H1 (cell line): ENCODE measurements at regions of chr17 and their contacts with region 1.

Region 1: DNA sequence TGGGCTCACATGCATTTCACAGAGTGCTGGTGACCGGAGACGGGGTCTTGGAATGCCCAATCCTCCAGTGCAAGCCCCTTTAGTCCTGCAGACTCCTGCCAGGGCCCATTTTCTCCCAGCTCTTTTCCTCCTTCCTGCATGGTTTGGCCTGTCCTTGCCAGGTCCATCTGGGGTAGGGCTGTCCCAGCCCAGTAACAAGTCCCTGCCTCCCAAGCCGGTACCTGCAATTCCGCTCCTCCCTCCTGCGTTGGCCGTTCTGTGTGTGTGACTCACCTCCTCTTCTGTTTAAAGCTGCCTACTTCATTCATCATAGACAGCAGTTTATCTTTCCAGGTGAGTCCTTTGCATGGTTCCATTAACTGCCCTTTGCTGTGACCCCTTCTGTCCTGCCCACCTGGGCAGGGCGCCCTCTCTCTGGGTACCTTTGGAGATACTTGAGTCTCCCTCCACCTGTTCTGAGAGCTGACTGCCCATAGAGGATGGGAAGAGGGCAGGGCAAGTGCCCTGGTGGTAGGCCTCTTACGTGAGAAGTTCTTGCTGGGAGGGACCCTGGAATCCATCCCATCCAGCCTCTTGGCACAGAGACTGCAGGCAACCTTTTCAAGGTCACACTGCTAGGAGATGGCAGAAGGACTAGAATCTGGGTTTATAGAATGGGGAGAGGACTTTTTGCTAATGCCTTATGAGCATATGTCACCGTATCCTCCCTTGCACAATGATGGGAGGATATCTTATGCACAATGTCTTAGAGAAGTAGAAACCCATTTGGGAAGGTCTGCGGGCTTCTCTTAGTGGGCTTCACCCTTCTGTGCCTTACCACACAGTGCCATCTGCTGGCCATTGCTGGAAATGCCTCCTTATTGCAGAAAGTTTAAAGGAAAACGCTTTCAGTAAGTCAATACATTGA is 29.7 kb upstream of the LGALS9 start:
- DNase-seq: peak; percentile 68 to 95
- H3K4me3 ChIP-seq: no peak overlapping the region
- H3K27ac ChIP-seq: no peak overlapping the region
- H3K4me1 ChIP-seq: no peaks in the 10 kb centered on the region; a peak in 1 of 7 replicates
- H3K27me3 ChIP-seq: no peaks in the 10 kb centered on the region
- CTCF ChIP-seq: peak; percentile 54 to 87 (median 87)
- EP300 ChIP-seq: peak in 1 of 2 experiments; percentile 33; a peak in 1 of 3 replicates
- POLR2A ChIP-seq: no peak
- RAD21 ChIP-seq: peak; percentile 90 to 93

Region 2: DNA sequence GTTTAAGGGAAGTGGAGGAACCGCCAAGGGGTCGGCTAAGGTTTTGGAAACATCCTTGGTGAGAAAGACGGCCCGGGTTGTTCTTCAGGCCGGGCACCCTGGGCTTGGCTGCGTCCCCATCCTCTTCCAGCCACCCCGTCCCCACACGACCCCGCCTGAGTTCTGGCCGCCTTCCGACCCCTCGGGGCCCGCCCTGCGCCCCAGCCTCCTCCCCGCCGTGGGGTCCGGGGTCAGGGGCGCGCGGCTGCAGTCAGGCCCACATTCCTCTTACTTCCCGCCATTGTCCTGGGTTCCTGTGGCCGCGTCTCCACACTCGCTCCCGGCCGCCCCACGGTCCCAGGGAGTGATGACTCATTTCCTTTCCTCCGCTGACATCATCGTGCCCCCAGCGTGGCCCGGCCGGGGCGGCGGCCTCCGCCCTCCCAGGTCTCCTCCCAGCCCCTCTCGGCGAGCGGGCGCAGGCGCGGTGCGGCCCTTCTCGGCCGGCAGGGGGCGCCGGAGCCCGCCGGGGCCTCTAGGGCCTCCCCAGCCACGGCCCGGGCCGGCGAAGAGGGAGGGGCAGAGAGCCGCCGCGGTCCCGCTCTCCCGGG is 247.8 kb before region 1 on chr17:
- CTCF ChIA-PET with region 1: interaction called, 15 read pairs
- POLR2A ChIA-PET with region 1: no interaction called
- DNase-seq: peak; percentile 53 to 90
- H3K4me3 ChIP-seq: peak overlapping the region; percentile 47 to 94 (median 64)
- H3K27ac ChIP-seq: peak overlapping the region; percentile 58; the same call in 1 of the 2 replicates
- H3K4me1 ChIP-seq: peaks cover 0 to 8% (median 4%) of the 10 kb centered on the region in 4 experiments; a peak in 3 of 7 replicates
- H3K27me3 ChIP-seq: no peaks in the 10 kb centered on the region
- CTCF ChIP-seq: peak; percentile 74 to 96 (median 76)
- EP300 ChIP-seq: no peak
- POLR2A ChIP-seq: peak in 1 of 2 experiments; percentile 81; a peak in 1 of 3 replicates
- RAD21 ChIP-seq: peak; percentile 52 to 85; a peak in 3 of 4 replicates

Region 3: GRCh38 chr17:27413792-27414191 is 187.5 kb before region 1 on chr17:
- CTCF ChIA-PET with region 1: interaction called, 20 read pairs
- POLR2A ChIA-PET with region 1: no interaction called
- DNase-seq: no peak
- H3K4me3 ChIP-seq: no peak overlapping the region
- H3K27ac ChIP-seq: no peak overlapping the region
- H3K4me1 ChIP-seq: no peaks in the 10 kb centered on the region; a peak in 1 of 7 replicates
- H3K27me3 ChIP-seq: 0 out of 7 replicates have a peak, but pooled peaks cover 0 to 4% (median 0%) of the 10 kb centered on the region in 4 experiments
- CTCF ChIP-seq: no peak
- EP300 ChIP-seq: no peak
- POLR2A ChIP-seq: no peak
- RAD21 ChIP-seq: no peak

Region 4: DNA sequence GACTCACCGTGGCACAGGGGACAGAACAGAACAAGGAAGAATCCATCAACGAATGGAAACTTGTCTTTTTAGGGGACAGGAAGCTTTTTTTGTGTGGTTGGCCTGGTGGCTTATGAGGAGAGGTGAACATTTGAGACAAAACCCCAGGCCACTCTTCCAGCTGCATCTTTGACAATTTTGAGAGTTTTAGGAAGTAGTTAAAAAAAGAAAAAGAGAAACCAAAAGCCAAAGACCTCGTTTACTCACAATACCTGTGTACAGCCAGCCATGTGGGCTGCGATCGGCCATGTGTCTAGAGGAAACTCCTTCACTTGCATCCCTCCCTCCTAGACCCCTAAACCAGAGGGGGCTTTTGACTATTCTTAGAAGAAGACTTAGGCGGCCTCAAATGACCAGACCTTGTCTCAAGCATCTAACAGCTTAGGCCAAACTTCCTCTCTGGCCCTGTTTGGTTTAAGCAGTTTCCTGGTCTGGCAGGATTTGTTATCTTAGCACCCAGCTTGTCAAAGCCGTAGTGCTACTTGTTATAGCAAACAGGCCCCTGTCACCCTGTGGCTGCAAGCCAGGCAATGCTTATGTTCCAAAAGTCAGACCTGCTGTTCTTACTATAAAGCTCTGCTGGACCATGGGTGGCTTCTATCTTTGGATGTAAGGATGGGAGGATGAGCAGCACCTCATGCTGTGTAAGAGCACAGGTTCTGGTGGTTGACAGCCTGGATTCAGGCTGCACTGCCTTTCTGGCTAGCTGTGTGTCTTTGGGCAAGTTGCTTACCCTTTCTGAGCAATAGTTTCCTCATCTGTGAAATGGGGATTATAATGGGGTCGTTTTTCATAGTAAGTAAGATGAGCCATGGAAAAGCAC is 127.3 kb before region 1 on chr17:
- CTCF ChIA-PET with region 1: interaction called, 23 read pairs
- POLR2A ChIA-PET with region 1: no interaction called
- DNase-seq: no peak
- H3K4me3 ChIP-seq: no peak overlapping the region
- H3K27ac ChIP-seq: no peak overlapping the region
- H3K4me1 ChIP-seq: peaks cover 12 to 28% (median 24%) of the 10 kb centered on the region in 4 experiments
- H3K27me3 ChIP-seq: no peaks in the 10 kb centered on the region
- CTCF ChIP-seq: no peak
- EP300 ChIP-seq: no peak
- POLR2A ChIP-seq: no peak
- RAD21 ChIP-seq: no peak

Region 5: DNA sequence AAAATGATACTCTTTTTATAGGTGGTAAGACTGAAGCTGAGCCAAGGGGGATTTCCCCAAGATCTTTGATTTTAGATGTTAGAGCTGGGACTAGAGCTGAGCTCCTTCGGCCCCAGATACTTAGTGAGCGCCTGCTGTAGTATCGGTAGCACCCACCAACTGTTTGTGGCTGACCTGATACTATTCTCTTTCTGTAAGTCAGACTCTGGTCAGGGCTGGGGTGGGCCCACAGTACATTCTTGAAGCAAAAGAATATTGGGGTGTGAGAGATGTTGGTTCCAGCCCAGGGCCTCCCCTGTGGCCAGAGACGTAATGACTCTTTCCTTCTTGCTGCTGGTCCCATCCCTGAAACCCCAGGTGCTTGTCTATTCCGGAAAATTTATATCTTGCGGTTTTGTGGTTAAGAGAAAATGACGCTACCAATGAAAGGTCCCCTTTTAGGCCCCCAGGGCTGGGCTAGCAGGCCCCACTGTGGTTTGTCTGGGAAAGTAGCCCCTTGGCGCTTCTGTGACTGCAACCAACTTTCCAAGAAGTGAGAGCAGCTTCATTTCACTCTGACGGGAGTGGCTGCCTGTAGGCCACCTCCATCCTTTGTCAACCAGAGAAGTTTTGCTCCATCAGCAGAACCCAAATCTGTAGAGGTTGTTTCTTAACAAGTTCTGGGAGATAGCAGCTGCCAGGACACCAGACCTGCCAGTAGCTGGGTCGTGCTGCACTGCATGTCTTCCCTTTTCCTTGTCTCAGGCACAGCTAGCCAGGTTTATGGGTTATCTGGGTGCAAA is 56.8 kb before region 1 on chr17:
- CTCF ChIA-PET with region 1: interaction called, 17 read pairs
- POLR2A ChIA-PET with region 1: no interaction called
- DNase-seq: no peak
- H3K4me3 ChIP-seq: no peak overlapping the region
- H3K27ac ChIP-seq: no peak overlapping the region
- H3K4me1 ChIP-seq: peaks cover 0 to 4% (median 2%) of the 10 kb centered on the region in 4 experiments; a peak in 5 of 7 replicates
- H3K27me3 ChIP-seq: no peaks in the 10 kb centered on the region
- CTCF ChIP-seq: no peak
- EP300 ChIP-seq: no peak
- POLR2A ChIP-seq: no peak
- RAD21 ChIP-seq: no peak

Region 6: DNA sequence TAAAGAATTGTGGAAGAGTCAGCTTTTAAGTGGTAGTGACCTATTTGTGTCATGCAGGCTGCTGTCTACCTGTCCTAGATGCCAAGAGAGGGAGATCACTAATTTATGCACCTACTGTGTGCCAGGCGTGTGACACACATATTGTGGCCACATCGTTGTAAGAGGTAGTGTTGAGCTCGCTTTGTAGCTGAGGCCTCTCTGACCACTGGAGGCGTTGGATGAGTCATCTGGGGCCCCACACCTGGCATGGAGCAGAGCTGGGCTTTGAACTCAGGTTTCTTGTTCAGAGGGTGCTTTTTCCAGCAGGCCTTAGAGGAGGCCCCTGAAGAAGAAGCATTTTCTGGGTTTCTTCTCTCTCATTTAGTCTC is 22.6 kb before region 1 on chr17:
- CTCF ChIA-PET with region 1: interaction called, 150 read pairs
- POLR2A ChIA-PET with region 1: no interaction called
- DNase-seq: no peak
- H3K4me3 ChIP-seq: no peak overlapping the region
- H3K27ac ChIP-seq: no peak overlapping the region
- H3K4me1 ChIP-seq: peaks cover 2 to 12% (median 8%) of the 10 kb centered on the region in 4 experiments; a peak in 6 of 7 replicates
- H3K27me3 ChIP-seq: no peaks in the 10 kb centered on the region
- CTCF ChIP-seq: no peak
- EP300 ChIP-seq: no peak
- POLR2A ChIP-seq: no peak
- RAD21 ChIP-seq: no peak

Region 7: GRCh38 chr17:27654654-27655524 is 53.6 kb after region 1 on chr17:
- CTCF ChIA-PET with region 1: interaction called, 305 read pairs
- POLR2A ChIA-PET with region 1: no interaction called
- DNase-seq: peak; percentile 75 to 93
- H3K4me3 ChIP-seq: no peak overlapping the region
- H3K27ac ChIP-seq: no peak overlapping the region
- H3K4me1 ChIP-seq: no peaks in the 10 kb centered on the region
- H3K27me3 ChIP-seq: no peaks in the 10 kb centered on the region
- CTCF ChIP-seq: peak; percentile 70 to 89 (median 84)
- EP300 ChIP-seq: no peak; a peak in 1 of 3 replicates
- POLR2A ChIP-seq: no peak
- RAD21 ChIP-seq: peak; percentile 57 to 62

Region 8: DNA sequence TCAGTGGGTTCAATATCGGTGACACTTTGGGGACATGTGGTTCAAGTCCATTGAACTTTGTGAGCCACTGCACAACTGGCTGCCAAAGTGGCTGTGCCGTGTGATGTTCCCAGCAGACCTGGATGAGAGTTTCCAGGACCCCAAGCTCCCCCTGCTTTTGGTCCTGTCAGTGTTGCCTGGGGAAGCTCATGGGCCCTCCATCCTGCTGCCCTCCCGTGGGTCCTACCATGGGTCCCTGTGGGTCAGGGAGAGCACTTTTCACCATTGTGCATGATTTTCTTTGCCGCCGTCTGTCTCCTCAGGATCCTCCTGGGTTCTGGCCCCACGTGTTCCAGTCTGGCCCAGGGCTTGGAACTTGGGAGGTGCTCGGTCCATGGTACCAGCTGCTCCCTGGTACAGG is 67.8 kb after region 1 on chr17:
- CTCF ChIA-PET with region 1: no interaction called
- POLR2A ChIA-PET with region 1: no interaction called
- DNase-seq: no peak
- H3K4me3 ChIP-seq: no peak overlapping the region
- H3K27ac ChIP-seq: no peak overlapping the region
- H3K4me1 ChIP-seq: no peaks in the 10 kb centered on the region
- H3K27me3 ChIP-seq: no peaks in the 10 kb centered on the region
- CTCF ChIP-seq: no peak
- EP300 ChIP-seq: no peak
- POLR2A ChIP-seq: no peak
- RAD21 ChIP-seq: no peak

Region 9: GRCh38 chr17:27692766-27693165 is 91.4 kb after region 1 on chr17:
- CTCF ChIA-PET with region 1: no interaction called
- POLR2A ChIA-PET with region 1: no interaction called
- DNase-seq: no peak
- H3K4me3 ChIP-seq: no peak overlapping the region
- H3K27ac ChIP-seq: no peak overlapping the region
- H3K4me1 ChIP-seq: no peaks in the 10 kb centered on the region
- H3K27me3 ChIP-seq: no peaks in the 10 kb centered on the region
- CTCF ChIP-seq: no peak
- EP300 ChIP-seq: no peak
- POLR2A ChIP-seq: no peak
- RAD21 ChIP-seq: no peak

Region 10: GRCh38 chr17:27771586-27771985 is 170.3 kb after region 1 on chr17:
- CTCF ChIA-PET with region 1: no interaction called
- POLR2A ChIA-PET with region 1: no interaction called
- DNase-seq: no peak
- H3K4me3 ChIP-seq: no peak overlapping the region
- H3K27ac ChIP-seq: no peak overlapping the region
- H3K4me1 ChIP-seq: peaks cover 0 to 6% (median 0%) of the 10 kb centered on the region in 4 experiments; a peak in 1 of 7 replicates
- H3K27me3 ChIP-seq: no peaks in the 10 kb centered on the region
- CTCF ChIP-seq: no peak
- EP300 ChIP-seq: no peak
- POLR2A ChIP-seq: no peak
- RAD21 ChIP-seq: no peak